B cell (primary cell): ENCODE measurements at regions of chr3 and their contacts with region 1.

Region 1: DNA sequence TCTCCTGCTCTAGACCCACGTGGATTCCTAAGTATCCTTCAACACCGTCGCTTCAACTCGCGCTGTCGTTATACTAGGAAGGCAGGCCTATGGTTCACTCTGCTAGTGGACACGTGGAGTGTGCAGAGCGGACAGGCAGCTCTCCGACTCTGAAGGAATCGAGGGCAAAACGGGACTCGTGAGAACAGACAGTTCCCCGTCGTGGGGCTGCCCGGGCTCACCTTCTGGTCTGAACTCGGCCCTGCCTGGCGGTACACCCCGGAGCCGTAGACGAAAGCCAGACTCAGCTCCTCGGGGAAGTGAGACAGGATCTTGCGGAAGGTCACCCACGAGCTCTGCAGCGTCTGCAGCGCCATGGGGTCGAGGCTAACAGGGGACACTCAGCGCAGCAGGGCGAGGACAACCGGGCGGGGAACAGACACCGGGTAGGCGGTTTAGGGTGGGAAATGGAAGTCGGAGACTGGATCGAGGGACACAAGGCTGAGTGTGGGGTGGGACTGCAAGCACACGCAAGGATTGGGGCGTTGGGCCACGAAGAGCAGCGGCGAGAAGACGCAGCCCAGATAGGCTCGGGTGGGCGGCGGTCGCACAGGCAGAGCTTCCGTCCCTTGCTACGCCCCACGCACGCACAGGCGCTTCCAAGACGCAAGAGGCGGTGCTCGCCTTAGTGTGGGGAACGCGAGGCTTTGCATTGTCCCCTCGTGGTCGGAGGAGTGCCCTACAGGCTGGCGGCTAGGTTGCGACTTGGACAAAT is at the start of gene TAMM41:
- DNase-seq: peak; percentile 90
- ATAC-seq: peak; percentile 100
- H3K4me3 ChIP-seq: peak within 1 kb of the TSS; percentile 56 to 96 (median 82)
- H3K4me3 Mint-ChIP-seq: peak within 1 kb of the TSS; percentile 99
- H3K27ac ChIP-seq: peak within 1 kb of the TSS; percentile 77 to 82
- H3K27ac Mint-ChIP-seq: peak within 1 kb of the TSS; percentile 96
- H3K4me1 ChIP-seq: peaks cover 22 to 27% of the 10 kb centered on the region in 2 donors
- H3K4me1 Mint-ChIP-seq: peaks cover 39% of the 10 kb centered on the region
- H3K27me3 ChIP-seq: no peaks in the 10 kb centered on the region
- H3K27me3 Mint-ChIP-seq: no peaks in the 10 kb centered on the region
- CTCF ChIP-seq: peak; percentile 74
- total RNA-seq, gene TAMM41: 52.3 and 54.2 TPM in 2 replicates

Region 2: GRCh38 chr3:12556671-12557472 is 710.4 kb after region 1 on chr3 and contains the start of gene MKRN2:
- CTCF ChIA-PET with region 1: no interaction called
- POLR2A ChIA-PET with region 1: no interaction called
- intact Hi-C with region 1: loop called (anchors 5 kb)
- DNase-seq: peak; percentile 91
- ATAC-seq: peak; percentile 96
- H3K4me3 ChIP-seq: peak within 1 kb of the TSS; percentile 85 to 91 (median 90)
- H3K4me3 Mint-ChIP-seq: peak within 1 kb of the TSS; percentile 91
- H3K27ac ChIP-seq: peak within 1 kb of the TSS; percentile 91 to 92
- H3K27ac Mint-ChIP-seq: peak within 1 kb of the TSS; percentile 84
- H3K4me1 ChIP-seq: peaks cover 40 to 41% of the 10 kb centered on the region in 2 donors
- H3K4me1 Mint-ChIP-seq: peaks cover 60% of the 10 kb centered on the region
- H3K27me3 ChIP-seq: peaks cover 0 to 17% (median 5%) of the 10 kb centered on the region in 4 experiments
- H3K27me3 Mint-ChIP-seq: peaks cover 23% of the 10 kb centered on the region
- CTCF ChIP-seq: no peak
- total RNA-seq, gene MKRN2: 25.9 and 29.3 TPM in 2 replicates